ENCODE measurements at regions of chr14 and their contacts with region 1.

Region 1: DNA sequence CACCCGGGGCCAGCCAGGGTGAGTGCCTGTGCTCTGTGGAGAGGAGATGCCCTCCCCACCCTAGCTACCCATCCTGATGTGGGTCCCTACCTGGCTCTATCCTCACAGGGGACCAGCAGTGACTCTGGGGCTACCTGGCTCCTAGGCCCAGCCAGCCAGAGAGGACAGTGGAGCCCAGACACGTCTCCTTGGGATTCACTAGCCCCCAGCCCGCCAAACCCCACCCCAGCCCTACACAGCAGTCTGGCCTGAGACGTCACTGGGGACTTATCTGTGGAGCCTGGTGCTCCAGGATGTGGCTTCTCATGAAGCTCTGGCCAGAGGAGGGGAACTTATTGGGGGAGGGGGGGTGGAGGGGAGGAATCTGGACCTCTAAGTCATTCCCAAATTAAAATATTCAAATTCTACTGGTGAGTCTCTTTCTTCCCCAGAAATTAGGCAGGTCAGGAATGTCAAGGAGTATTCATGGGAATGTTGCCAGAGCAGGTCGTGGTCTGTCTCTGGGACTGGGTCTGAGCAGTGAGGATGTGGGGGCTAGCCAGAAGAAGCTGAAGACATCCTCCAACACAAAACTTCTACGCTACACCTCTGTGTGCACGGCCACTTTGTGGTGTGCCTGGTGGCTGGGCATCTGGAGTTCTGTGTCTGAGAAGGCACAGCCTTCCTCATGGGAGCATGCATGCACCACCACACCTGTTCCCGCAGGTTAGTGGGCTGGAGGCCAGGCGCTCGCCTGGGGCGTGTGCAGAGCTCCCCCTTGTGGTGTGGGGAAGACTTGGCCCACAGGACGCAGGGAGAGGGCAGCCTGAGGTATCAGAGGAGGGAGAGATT is 2.7 kb downstream of the CMTM5 start:
- DNase-seq: peak; percentile 76
- ATAC-seq: peak; percentile 37

Region 2: DNA sequence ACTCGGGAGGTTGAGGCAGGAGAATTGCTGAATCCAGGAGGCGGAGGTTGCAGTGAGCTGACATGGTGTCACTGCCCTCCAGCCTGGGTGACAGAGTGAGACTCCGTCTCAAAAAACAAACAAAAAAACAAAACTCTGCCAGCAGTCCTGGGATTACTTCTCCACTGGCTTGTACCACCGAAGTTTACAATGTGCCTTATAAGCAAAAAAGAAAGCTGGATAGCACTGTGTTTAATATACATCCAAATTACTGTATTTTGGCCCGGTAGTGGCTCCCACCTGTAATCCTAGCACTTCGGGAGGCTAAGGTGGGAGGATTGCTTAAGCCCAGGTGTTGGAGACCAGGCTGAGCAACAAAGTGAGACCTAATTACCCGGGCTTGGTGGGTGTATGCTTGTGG is 110.4 kb before region 1 on chr14:
- intact Hi-C with region 1: loop called (anchors 10 kb)
- DNase-seq: no peak
- ATAC-seq: no peak

Region 3: DNA sequence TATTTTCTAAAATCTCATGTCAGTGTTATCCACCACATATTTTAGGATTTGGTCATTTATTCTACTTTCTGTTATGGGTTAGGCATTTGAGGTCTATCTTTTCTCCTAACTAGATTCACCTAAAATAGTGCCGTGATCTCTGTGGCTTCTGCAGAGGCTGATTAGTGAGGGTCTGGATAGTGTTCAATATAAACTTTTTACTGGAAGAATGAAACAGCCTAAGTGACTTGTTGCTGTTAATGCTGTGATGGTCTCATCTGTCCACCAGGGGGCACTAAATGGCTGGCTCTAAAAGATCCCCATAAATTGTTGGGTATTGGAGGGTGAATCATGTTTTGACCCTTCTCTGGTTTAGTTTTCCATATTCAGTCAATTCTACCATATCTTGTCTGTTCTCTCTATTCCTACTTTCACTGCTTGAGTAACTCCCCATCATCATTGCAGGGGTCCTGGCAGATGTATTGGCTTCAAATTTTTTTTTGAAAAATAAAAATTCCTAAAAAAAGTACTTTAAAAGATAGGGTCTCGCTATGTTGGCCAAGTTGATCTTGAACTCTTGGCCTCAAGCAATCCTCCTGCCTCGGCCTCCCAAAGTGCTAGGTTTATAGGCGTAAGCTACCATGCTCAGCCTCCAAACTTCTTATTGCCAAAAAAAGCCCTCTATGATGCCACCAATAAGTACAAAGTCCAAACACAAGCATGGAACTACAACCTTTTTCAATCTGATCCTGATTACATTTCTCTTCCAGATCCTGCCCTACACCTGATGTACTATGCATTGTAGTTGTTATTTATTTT is 51.4 kb before region 1 on chr14:
- intact Hi-C with region 1: loop called (anchors 5 kb)
- DNase-seq: no peak
- ATAC-seq: peak; percentile 84

Region 4: DNA sequence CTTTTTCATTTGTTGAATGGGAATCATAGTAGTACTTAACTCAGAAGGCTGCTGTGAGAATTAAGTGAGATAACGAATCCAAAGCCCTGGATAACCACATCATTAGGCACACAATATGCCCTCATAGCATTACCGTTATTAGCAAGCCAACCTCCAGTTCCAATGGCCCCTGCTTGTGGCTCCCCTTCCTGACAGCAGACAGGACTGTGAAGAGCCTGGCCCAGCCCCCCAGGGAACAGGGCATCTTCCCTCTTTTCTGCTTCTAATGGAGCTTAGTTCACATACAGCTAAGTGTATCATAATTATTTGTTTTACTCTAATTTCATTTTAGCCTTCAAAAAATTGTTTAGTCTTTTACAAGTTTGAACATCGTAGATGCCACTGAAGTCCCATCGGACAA is 296.3 kb after region 1 on chr14:
- intact Hi-C with region 1: no loop called
- DNase-seq: no peak
- ATAC-seq: no peak